ENCODE measurements at regions of chr6 and their contacts with region 1.

Region 1: DNA sequence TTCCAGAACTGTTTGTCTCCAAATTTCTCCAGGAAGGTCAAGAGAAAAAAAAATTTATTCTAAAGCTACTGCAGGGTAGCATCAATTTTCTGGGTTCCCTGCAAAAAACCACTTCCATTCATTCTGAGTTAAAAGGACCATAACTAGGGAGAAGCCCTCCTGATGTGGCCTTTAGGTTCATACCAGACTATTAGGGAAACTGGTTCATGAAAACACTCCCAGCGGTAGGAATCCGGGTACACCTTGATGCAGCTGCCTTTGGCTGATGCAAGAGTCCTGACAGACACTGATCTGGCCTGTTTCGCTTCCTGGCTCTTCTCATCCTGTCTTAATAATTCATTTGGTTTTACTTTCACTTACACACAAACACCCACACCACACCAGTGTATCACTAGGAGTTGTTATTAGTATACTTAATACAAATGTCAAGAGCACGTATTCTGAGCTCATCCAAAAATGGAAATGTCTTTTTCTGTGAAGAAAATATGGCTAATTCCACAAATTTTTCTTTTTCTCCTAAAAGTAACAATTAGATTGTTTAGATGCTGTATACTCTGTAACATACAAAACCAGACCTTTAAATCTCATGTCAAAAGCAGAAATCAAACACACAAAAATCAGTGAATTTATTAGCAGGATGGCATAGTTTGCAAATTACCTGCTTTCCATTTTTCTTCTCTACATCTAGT is 38.4 kb upstream of the ARHGAP18 start:
- DNase-seq: peak; percentile 78
- ATAC-seq: peak; percentile 90
- H3K4me3 ChIP-seq: peak overlapping the region in 3 of 5 experiments; percentile 24 to 42 (median 24)
- H3K4me3 Mint-ChIP-seq: peak overlapping the region; percentile 70
- H3K27ac ChIP-seq: peak overlapping the region; percentile 70 to 80
- H3K27ac Mint-ChIP-seq: peak overlapping the region; percentile 81
- H3K4me1 ChIP-seq: peaks cover 43 to 46% of the 10 kb centered on the region in 2 donors
- H3K4me1 Mint-ChIP-seq: peaks cover 58% of the 10 kb centered on the region
- H3K27me3 ChIP-seq: no peaks in the 10 kb centered on the region
- H3K27me3 Mint-ChIP-seq: no peaks in the 10 kb centered on the region
- CTCF ChIP-seq: no peak

Region 2: DNA sequence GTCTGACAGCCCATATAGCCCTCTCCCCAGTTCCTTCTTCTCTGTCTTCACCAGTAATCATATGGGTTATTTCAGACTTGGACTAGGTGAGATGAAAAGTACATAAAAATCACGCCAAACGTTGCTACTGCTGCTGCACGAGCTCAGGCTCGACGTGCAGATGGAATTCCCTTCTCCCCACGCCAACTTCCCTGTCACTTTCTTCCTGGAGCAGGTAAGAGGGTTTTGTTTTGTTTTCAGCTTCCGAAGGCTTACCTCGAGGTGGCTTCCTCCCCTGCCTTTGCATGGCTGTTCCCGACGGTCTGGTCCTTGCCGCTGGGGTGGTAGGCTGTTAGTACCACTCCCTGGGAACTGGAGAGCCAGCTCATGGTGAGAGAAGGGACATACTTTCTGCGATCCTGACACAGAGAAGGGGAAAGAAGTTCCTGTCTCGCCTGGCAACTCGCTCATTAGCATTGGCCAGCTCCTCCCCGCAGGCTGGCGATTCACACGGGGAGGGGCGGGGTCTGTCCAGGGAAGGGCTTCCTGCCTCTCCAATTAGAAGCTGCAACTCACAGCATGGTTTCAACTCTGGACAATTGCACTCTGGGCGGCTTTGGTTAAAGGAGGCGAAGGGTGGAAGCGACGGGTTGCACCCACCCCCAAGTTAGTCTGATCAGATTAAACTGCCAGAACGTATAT is 38.4 kb before region 1 on chr6 and contains the start of gene ARHGAP18:
- CTCF ChIA-PET with region 1: interaction called, 3 read pairs
- POLR2A ChIA-PET with region 1: no interaction called
- intact Hi-C with region 1: loop called (anchors 2 kb)
- DNase-seq: peak; percentile 70
- ATAC-seq: peak; percentile 93
- H3K4me3 ChIP-seq: peak within 1 kb of the TSS; percentile 63 to 95 (median 73)
- H3K4me3 Mint-ChIP-seq: peak within 1 kb of the TSS; percentile 100
- H3K27ac ChIP-seq: peak within 1 kb of the TSS; percentile 50 to 75
- H3K27ac Mint-ChIP-seq: peak within 1 kb of the TSS; percentile 90
- H3K4me1 ChIP-seq: peaks cover 18 to 19% of the 10 kb centered on the region in 2 donors
- H3K4me1 Mint-ChIP-seq: peaks cover 35% of the 10 kb centered on the region
- H3K27me3 ChIP-seq: no peaks in the 10 kb centered on the region
- H3K27me3 Mint-ChIP-seq: no peaks in the 10 kb centered on the region
- CTCF ChIP-seq: no peak
- total RNA-seq, gene ARHGAP18: 3.9 TPM in 2 replicates

Measured in B cell (primary cell).